Left ventricle myocardium inferior (tissue), 1 donor: ENCODE measurements at regions of chr9 and their contacts with region 1.

Region 1: GRCh38 chr9:113095561-113095960 is 39.0 kb upstream of the ZFP37 start:
- DNase-seq: no peak
- H3K4me3 ChIP-seq: no peak overlapping the region
- H3K27ac ChIP-seq: no peak overlapping the region
- H3K4me1 ChIP-seq: no peaks in the 10 kb centered on the region
- H3K27me3 ChIP-seq: peaks cover 93% of the 10 kb centered on the region
- CTCF ChIP-seq: no peak

Region 2: GRCh38 chr9:112921549-112921948 is 174.0 kb before region 1 on chr9:
- intact Hi-C with region 1: loop called (anchors 10 kb)
- DNase-seq: no peak
- H3K4me3 ChIP-seq: no peak overlapping the region
- H3K27ac ChIP-seq: no peak overlapping the region
- H3K4me1 ChIP-seq: no peaks in the 10 kb centered on the region
- H3K27me3 ChIP-seq: peaks cover 4% of the 10 kb centered on the region
- CTCF ChIP-seq: peak; percentile 61

Region 3: GRCh38 chr9:113011911-113012381 is 83.6 kb before region 1 on chr9 and contains the start of gene ZNF883:
- intact Hi-C with region 1: no loop called
- DNase-seq: peak; percentile 62
- H3K4me3 ChIP-seq: peak within 1 kb of the TSS; percentile 67
- H3K27ac ChIP-seq: no peak within 1 kb of the TSS
- H3K4me1 ChIP-seq: peaks cover 9% of the 10 kb centered on the region
- H3K27me3 ChIP-seq: peaks cover 4% of the 10 kb centered on the region
- CTCF ChIP-seq: no peak
- total RNA-seq, gene ZNF883: 6.2 TPM